ENCODE measurements at regions of chr10 and their contacts with region 1.

Region 1: GRCh38 chr10:84537447-84537931 is 209.1 kb downstream of the CCSER2 start:
- DNase-seq: peak; percentile 48
- H3K4me3 Mint-ChIP-seq: no peak overlapping the region
- H3K27ac Mint-ChIP-seq: no peak overlapping the region
- H3K4me1 Mint-ChIP-seq: peaks cover 15% of the 10 kb centered on the region
- H3K27me3 Mint-ChIP-seq: peaks cover 12% of the 10 kb centered on the region

Region 2: GRCh38 chr10:84166620-84167288 is 370.7 kb before region 1 on chr10:
- CTCF ChIA-PET with region 1: no interaction called
- POLR2A ChIA-PET with region 1: no interaction called
- DNase-seq: no peak
- H3K4me3 Mint-ChIP-seq: no peak overlapping the region
- H3K27ac Mint-ChIP-seq: no peak overlapping the region
- H3K4me1 Mint-ChIP-seq: no peaks in the 10 kb centered on the region
- H3K27me3 Mint-ChIP-seq: peaks cover 19% of the 10 kb centered on the region

Region 3: GRCh38 chr10:84469470-84469869 is 68.0 kb before region 1 on chr10:
- CTCF ChIA-PET with region 1: no interaction called
- POLR2A ChIA-PET with region 1: no interaction called
- DNase-seq: no peak
- H3K4me3 Mint-ChIP-seq: no peak overlapping the region
- H3K27ac Mint-ChIP-seq: no peak overlapping the region
- H3K4me1 Mint-ChIP-seq: no peaks in the 10 kb centered on the region
- H3K27me3 Mint-ChIP-seq: no peaks in the 10 kb centered on the region

Region 4: DNA sequence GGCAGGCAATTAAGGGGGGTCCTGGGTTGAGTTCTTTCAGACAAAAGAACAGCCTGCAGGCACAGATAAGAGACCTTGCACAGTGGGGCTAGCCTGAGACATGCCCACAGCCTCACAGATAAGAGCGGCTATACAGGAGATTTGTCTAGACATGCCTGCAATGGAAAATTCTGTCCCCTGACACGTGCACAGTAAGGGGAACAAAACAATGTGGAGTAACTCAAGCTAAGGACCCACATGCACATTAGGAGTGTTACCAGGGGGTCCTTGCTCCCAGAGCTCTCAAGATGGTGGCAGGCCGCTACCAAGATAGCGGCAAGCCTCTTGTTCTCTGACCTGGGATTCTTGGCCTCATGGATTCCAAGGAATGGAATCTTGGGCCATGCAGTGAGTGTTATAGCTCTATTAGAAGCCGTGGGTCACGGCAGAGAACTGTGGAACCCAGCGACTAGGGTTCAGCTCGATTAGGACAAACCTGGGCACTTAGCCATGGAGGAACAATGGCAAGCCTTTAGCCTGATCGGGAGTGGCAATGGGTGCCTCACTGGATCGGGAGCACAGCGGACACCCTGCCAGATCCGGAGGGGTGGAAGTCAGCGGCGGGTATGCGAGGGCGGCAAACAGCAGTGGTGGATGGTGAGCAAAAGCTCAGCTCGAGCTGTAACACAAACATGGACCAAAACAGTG is 12.2 kb before region 1 on chr10:
- CTCF ChIA-PET with region 1: interaction called, 14 read pairs
- POLR2A ChIA-PET with region 1: no interaction called
- DNase-seq: no peak
- H3K4me3 Mint-ChIP-seq: no peak overlapping the region
- H3K27ac Mint-ChIP-seq: peak overlapping the region; percentile 15
- H3K4me1 Mint-ChIP-seq: peaks cover 6% of the 10 kb centered on the region
- H3K27me3 Mint-ChIP-seq: no peaks in the 10 kb centered on the region

Region 5: DNA sequence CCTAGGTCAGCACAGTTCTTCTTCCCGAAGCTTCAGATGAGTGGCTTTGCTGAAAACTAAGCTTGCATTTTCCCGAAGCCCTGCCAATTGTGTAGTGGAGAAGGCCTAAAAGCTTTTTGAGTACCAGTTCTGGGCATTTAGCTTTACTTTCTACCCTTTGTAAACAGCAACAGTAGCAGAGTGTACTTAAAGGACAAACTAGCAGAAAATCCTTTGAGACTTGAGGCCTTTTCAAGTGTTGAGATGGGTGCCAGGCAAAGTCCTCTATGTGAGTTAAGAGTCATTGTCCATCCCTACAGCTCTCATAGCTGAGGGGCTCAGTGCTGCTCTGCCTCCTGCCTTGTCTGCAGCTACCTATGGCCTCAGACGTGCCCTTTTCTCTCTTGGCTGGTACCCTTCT is 159.1 kb after region 1 on chr10:
- CTCF ChIA-PET with region 1: no interaction called
- POLR2A ChIA-PET with region 1: no interaction called
- DNase-seq: no peak
- H3K4me3 Mint-ChIP-seq: no peak overlapping the region
- H3K27ac Mint-ChIP-seq: no peak overlapping the region
- H3K4me1 Mint-ChIP-seq: no peaks in the 10 kb centered on the region
- H3K27me3 Mint-ChIP-seq: peaks cover 6% of the 10 kb centered on the region

Measured in activated CD4-positive, alpha-beta T cell treated with anti-CD3 and anti-CD28 coated beads, Interleukin-2, amount 10 ng/mL, durations not matched to agents 7 days and 5 days (primary cell).